Activated CD4-positive, alpha-beta memory T cell treated with anti-CD3 and anti-CD28 coated beads for 36 hours (primary cell): ENCODE measurements at regions of chr2 and their contacts with region 1.

Region 1: GRCh38 chr2:64831134-64831976 is 157.8 kb upstream of the SLC1A4 start:
- DNase-seq: peak; percentile 97
- H3K4me3 Mint-ChIP-seq: peak overlapping the region; percentile 57
- H3K27ac Mint-ChIP-seq: peak overlapping the region; percentile 86
- H3K4me1 Mint-ChIP-seq: peaks cover 11% of the 10 kb centered on the region
- H3K27me3 Mint-ChIP-seq: no peaks in the 10 kb centered on the region

Region 2: GRCh38 chr2:64609227-64609941 is 222.0 kb before region 1 on chr2:
- CTCF ChIA-PET with region 1: interaction called, 17 read pairs
- POLR2A ChIA-PET with region 1: interaction called, 4 read pairs
- intact Hi-C with region 1: loop called (anchors 1 kb)
- DNase-seq: peak; percentile 75
- H3K4me3 Mint-ChIP-seq: peak overlapping the region; percentile 57
- H3K27ac Mint-ChIP-seq: no peak overlapping the region
- H3K4me1 Mint-ChIP-seq: peaks cover 26% of the 10 kb centered on the region
- H3K27me3 Mint-ChIP-seq: no peaks in the 10 kb centered on the region

Region 3: DNA sequence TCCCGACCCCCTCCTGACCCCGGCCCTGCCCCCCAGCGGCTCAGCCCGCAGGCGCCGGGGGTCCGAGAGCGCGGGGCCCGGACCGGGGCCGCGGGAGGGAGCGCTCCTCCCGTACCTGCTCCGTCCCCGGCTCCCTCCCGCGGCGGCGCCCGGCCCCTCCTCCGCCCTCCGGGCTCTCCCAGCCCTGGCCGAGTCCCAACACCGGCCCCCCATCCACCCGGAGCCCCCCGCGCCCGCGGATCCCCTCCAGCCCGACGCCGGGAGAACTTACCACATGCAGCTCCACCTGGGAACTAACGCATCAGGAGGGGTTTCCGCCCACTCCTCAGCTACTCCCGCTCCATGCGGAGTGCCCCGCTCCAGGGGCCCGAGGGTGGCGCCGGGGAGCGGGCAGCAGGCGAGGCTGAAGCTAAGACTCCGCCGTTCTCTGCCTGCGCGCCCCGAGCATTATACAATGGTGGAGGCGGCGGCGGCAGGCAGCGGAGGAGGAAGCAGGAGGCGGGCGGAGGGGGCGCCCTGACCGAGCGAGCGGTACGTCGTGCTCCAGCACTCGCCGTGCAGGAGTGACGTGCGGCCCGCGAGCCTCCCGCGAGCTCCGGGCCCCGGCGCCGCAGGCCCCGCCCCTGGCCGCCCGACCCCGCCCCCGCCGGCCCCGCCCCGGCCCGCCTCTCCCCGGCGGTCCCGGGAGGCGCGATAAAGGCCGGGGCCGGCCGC is 177.8 kb before region 1 on chr2 and contains the start of gene SERTAD2:
- CTCF ChIA-PET with region 1: interaction called, 131 read pairs
- POLR2A ChIA-PET with region 1: interaction called, 9 read pairs
- intact Hi-C with region 1: loop called (anchors 1 kb)
- DNase-seq: peak; percentile 86
- H3K4me3 Mint-ChIP-seq: peak within 1 kb of the TSS; percentile 79
- H3K27ac Mint-ChIP-seq: peak within 1 kb of the TSS; percentile 72
- H3K4me1 Mint-ChIP-seq: peaks cover 51% of the 10 kb centered on the region
- H3K27me3 Mint-ChIP-seq: no peaks in the 10 kb centered on the region
- total RNA-seq, gene SERTAD2: 11.3 to 11.4 TPM

Region 4: DNA sequence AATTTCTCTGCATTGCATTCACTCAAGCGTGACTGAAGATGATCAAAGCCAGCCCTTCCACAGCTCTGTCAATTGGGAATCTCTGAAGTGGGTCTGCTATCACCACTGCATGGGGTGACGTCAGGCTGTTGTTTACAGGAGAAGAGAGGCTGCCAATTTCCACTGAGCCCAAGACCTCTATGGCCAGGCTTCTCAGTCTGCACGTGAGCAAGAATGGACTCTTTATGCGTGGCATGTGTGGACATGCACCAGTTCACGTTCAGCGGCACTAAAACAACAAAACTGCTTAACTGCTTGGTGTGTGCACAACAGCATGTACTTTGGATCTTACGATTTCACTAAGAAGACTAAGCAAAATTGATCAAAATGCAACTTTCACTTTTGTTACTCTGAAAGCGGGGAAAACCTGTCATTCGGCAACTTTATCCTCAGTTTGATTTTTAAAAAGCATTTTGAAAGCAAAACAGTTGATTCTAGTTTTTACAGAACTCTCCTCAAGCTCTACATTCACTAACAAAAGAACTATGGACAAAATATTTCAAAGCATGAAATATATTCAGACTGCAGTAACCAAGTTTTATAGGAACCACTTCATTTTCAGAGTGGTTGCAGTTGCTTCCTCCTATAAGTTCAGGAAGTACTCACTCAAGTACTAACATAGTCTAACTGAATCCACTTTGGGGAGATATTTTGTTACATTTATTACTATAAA is 100.6 kb before region 1 on chr2:
- CTCF ChIA-PET with region 1: no interaction called
- POLR2A ChIA-PET with region 1: no interaction called
- intact Hi-C with region 1: loop called (anchors 2 kb)
- DNase-seq: peak; percentile 47
- H3K4me3 Mint-ChIP-seq: peak overlapping the region; percentile 80
- H3K27ac Mint-ChIP-seq: peak overlapping the region; percentile 83
- H3K4me1 Mint-ChIP-seq: peaks cover 42% of the 10 kb centered on the region
- H3K27me3 Mint-ChIP-seq: no peaks in the 10 kb centered on the region

Region 5: DNA sequence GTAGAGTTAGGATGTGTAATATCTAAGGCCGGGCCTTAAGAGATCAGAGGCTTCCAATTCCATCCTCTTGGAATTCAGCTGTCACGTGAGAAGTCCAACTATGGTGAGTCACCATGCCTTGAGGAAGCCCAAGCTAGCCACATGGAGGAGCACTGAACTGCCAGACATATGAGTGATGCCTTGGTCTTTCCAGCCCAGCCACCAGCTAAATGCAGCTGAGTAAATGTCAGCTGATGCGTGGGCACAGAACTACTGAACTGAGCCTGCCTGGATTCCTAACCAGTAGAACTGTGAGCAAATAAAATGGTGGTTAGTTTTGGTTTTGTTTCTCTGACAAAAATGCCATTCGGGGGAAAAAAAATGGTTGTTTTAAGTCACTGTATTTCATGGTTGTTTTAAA is 23.9 kb before region 1 on chr2:
- CTCF ChIA-PET with region 1: interaction called, 13 read pairs
- POLR2A ChIA-PET with region 1: no interaction called
- intact Hi-C with region 1: loop called (anchors 2 kb)
- DNase-seq: peak; percentile 84
- H3K4me3 Mint-ChIP-seq: no peak overlapping the region
- H3K27ac Mint-ChIP-seq: peak overlapping the region; percentile 32
- H3K4me1 Mint-ChIP-seq: peaks cover 26% of the 10 kb centered on the region
- H3K27me3 Mint-ChIP-seq: no peaks in the 10 kb centered on the region

Region 6: DNA sequence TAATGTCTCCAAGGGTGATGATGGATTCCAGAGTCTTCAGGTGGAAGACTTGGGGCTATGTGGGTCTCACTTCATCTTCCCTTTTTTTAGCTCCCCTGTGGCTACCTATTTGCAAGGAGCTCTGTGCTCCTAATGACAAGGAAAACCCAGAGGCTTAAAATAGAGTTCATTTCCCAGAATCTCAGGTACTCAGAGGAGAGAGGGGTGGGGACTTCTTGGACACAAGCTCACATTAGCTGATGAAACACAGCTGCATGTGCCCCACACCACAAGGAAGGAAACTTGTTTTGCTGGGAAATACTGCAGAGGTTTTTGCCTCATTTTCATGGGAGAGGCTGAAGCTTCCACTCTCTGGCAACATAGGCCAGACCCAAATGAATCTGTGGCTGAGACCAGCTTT is 19.3 kb after region 1 on chr2:
- CTCF ChIA-PET with region 1: interaction called, 10 read pairs
- POLR2A ChIA-PET with region 1: no interaction called
- intact Hi-C with region 1: no loop called
- DNase-seq: no peak
- H3K4me3 Mint-ChIP-seq: no peak overlapping the region
- H3K27ac Mint-ChIP-seq: no peak overlapping the region
- H3K4me1 Mint-ChIP-seq: peaks cover 5% of the 10 kb centered on the region
- H3K27me3 Mint-ChIP-seq: no peaks in the 10 kb centered on the region

Region 7: DNA sequence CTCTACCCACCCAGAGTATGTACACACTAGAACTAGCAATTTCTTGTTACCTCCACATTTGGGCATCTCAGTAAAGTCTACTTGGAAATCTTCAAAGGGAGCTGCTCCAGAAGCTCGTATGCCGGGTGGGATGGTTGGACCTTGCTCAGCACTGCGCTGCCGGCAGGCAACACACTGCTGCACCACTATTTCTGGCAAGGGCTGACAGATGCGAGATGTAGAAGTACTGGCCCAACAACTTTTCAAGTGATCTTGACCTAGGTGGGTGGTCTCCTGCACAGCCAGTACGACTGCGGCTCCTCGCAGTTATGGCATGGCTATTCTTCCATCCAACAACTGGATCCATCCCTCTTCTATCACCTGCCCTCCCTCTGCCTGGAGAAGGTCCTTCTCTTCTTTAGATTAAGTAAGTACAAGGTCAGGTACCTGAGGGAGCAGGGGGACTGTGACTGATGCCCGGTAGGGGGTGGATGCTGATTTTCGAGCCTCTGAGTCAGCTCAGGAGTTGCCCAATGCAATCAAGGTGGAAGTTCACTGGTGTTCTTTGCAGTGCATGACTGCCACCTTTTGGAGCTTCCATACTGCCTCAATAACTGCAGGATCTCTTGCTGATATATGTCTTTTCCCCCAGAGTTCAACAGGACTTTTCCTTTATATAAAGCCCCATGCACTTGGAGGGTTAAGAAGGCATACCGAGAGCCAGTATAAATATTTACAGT is 57.4 kb after region 1 on chr2:
- CTCF ChIA-PET with region 1: no interaction called
- POLR2A ChIA-PET with region 1: no interaction called
- intact Hi-C with region 1: no loop called
- DNase-seq: no peak
- H3K4me3 Mint-ChIP-seq: no peak overlapping the region
- H3K27ac Mint-ChIP-seq: no peak overlapping the region
- H3K4me1 Mint-ChIP-seq: no peaks in the 10 kb centered on the region
- H3K27me3 Mint-ChIP-seq: peaks cover 2% of the 10 kb centered on the region

Region 8: DNA sequence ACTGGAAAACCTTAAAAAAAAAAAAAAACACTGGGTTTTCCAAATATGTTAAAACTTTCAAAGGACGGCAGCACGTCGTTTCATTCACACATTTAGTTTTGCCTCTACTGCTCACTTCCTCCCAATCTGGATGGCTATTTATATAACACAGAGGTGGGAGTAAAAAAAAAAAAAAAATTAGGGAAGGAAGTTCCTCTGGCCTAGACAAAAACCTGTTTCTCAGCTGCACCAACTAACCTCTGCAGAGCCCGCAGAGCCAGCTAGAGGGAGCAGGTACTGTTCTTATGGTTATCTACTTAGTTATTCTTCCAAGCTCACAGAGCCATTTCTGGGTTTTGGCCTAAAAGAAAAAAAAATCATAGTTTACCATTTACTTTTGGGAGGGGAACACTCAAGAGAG is 186.0 kb after region 1 on chr2:
- CTCF ChIA-PET with region 1: no interaction called
- POLR2A ChIA-PET with region 1: no interaction called
- intact Hi-C with region 1: no loop called
- DNase-seq: no peak
- H3K4me3 Mint-ChIP-seq: no peak overlapping the region
- H3K27ac Mint-ChIP-seq: no peak overlapping the region
- H3K4me1 Mint-ChIP-seq: no peaks in the 10 kb centered on the region
- H3K27me3 Mint-ChIP-seq: no peaks in the 10 kb centered on the region